Left ventricle myocardium superior (tissue), 1 donor: ENCODE measurements at regions of chr9 and their contacts with region 1.

Region 1: DNA sequence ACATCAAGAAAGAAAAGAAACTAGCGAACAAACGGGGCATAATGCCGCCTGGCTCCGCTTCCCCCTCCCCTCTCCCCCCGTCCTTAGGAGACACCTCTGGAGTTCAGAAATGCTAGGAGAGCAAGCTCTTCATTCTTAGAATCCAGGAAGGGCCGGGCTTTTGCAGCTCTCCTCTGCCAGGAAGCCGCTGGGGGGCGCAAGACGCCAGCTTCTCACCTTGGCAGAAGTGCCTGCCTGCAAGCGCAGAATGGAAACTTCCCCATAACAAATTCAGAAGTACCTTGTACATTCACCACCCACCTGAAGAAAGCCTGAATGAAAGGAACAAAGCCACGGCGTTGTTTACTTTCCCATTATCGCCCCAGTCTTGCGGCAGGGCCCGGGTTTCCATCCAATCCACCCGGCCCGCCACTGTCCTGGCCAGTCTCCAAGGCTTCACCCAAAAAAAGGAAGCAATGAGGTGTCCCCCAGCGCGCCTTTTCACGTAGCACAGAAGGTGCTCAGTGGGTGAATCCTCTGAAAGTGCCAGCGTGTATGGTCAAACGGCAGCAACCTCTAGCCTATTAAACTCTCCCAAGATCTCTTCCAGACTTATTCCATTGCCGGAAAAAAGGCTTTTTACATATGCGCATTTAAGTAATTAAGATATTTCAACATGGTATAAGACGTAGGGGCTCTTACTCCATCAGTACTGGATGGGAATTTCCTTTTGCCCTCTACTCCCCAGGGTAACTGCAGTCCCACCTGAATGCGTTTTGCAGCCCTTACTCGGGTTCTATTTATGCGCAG is 1.6 kb upstream of the GADD45G start:
- DNase-seq: peak; percentile 94
- ATAC-seq: peak; percentile 37

Region 2: GRCh38 chr9:89919169-89919681 is 316.1 kb after region 1 on chr9:
- intact Hi-C with region 1: loop called (anchors 5 kb)
- DNase-seq: peak; percentile 55
- ATAC-seq: peak; percentile 97

Region 3: DNA sequence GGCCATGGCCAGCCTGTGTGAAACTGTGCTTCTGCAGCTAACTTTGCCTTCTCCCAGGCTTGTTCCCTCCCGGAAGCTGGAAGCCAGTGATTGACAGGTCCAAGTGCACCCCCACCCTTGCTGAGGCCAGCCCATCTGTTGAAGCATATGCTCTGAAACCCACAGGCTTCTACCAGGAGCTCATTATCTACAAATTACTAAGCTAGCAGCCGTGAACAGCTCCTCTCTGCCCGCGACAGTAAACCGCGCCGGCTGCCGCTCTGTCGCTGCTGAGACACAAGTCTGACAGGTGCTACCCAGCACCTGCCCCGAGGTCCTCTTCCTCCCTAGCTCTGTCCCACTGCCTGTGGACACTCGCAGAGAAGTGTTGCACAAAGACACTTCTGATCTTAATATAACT is 492.5 kb after region 1 on chr9:
- intact Hi-C with region 1: loop called (anchors 2 kb)
- DNase-seq: no peak
- ATAC-seq: no peak